Psoas muscle (tissue), 8 donors: ENCODE measurements at regions of chrX and their contacts with region 1.

Region 1: DNA sequence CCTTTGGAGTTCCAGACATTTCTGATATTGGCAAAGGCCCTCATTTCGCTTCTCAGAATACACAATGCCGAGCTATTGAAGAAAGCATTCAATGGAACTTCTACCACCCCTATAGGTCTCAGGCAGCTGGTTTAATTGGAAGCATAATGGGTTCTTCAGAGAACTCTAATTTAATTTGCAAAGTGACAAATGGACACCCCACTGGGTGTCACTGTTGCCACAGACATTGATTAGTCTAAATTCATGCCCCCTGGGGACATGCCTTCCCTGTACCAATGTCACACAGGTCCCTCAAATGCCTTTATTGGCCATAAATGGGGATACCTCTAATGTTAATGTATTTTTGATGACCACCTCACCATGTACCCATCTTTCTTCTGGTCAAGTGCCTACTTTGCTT is 22.9 kb upstream of the TMEM255A start:
- DNase-seq: no peak
- ATAC-seq: peak; percentile 47 to 84 (median 71)
- H3K4me3 ChIP-seq: no peak overlapping the region
- H3K27ac ChIP-seq: no peak overlapping the region
- H3K4me1 ChIP-seq: no peaks in the 10 kb centered on the region
- H3K27me3 ChIP-seq: no peaks in the 10 kb centered on the region
- CTCF ChIP-seq: peak; percentile 37

Region 2: GRCh38 chrX:120213436-120214265 is 120.5 kb before region 1 on chrX:
- intact Hi-C with region 1: no loop called
- DNase-seq: peak in 1 of 2 donors; percentile 26
- ATAC-seq: peak in 3 of 4 donors; percentile 59 to 77 (median 76)
- H3K4me3 ChIP-seq: no peak overlapping the region
- H3K27ac ChIP-seq: no peak overlapping the region
- H3K4me1 ChIP-seq: no peaks in the 10 kb centered on the region
- H3K27me3 ChIP-seq: no peaks in the 10 kb centered on the region
- CTCF ChIP-seq: peak; percentile 67

Region 3: DNA sequence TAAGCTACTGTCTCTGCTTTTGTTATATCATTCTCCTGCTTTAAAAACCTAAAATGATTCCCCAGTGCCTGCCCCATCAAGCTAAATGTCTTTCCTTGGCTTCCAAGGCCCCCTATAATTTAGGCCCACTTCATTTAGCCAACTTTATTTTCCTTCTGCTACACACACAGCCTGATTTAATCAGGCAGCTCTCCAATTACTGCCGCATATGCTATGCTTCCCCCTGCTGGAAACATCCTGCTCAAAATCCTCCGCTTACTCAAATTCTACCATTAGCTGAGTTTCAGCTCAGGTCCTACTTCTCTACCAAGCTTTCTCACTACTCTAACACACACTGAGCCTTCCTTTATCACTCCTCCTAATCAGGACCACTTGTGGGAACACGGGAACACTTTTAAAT is 118.0 kb after region 1 on chrX:
- intact Hi-C with region 1: loop called in 1 of 2 experiments (anchors 5 kb)
- DNase-seq: no peak
- ATAC-seq: peak; percentile 44 to 71 (median 58)
- H3K4me3 ChIP-seq: no peak overlapping the region
- H3K27ac ChIP-seq: peak overlapping the region; percentile 56
- H3K4me1 ChIP-seq: peaks cover 4% of the 10 kb centered on the region
- H3K27me3 ChIP-seq: no peaks in the 10 kb centered on the region
- CTCF ChIP-seq: peak; percentile 39

Region 4: GRCh38 chrX:120477453-120477852 is 143.3 kb after region 1 on chrX:
- intact Hi-C with region 1: loop called (anchors 5 kb)
- DNase-seq: no peak
- ATAC-seq: no peak
- H3K4me3 ChIP-seq: no peak overlapping the region
- H3K27ac ChIP-seq: no peak overlapping the region
- H3K4me1 ChIP-seq: no peaks in the 10 kb centered on the region
- H3K27me3 ChIP-seq: no peaks in the 10 kb centered on the region
- CTCF ChIP-seq: no peak